K562 (cell line): ENCODE measurements at regions of chr11 and their contacts with region 1.

Region 1: GRCh38 chr11:111454561-111455192 is 57.5 kb downstream of the BTG4 start:
- DNase-seq: peak; percentile 65 to 80 (median 78)
- ATAC-seq: peak; percentile 92
- H3K4me3 ChIP-seq: no peak overlapping the region
- H3K27ac ChIP-seq: no peak overlapping the region
- H3K4me1 ChIP-seq: peaks cover 0 to 6% of the 10 kb centered on the region in 2 experiments; a peak in 1 of 5 replicates
- H3K27me3 ChIP-seq: peaks cover 3 to 50% of the 10 kb centered on the region in 2 experiments; a peak in 4 of 5 replicates
- CTCF ChIP-seq: peak; percentile 28 to 59 (median 56); a peak in 4 of 6 replicates
- EP300 ChIP-seq: no peak
- POLR2A ChIP-seq: no peak
- RAD21 ChIP-seq: peak in 1 of 2 experiments; percentile 44; a peak in 2 of 4 replicates

Region 2: DNA sequence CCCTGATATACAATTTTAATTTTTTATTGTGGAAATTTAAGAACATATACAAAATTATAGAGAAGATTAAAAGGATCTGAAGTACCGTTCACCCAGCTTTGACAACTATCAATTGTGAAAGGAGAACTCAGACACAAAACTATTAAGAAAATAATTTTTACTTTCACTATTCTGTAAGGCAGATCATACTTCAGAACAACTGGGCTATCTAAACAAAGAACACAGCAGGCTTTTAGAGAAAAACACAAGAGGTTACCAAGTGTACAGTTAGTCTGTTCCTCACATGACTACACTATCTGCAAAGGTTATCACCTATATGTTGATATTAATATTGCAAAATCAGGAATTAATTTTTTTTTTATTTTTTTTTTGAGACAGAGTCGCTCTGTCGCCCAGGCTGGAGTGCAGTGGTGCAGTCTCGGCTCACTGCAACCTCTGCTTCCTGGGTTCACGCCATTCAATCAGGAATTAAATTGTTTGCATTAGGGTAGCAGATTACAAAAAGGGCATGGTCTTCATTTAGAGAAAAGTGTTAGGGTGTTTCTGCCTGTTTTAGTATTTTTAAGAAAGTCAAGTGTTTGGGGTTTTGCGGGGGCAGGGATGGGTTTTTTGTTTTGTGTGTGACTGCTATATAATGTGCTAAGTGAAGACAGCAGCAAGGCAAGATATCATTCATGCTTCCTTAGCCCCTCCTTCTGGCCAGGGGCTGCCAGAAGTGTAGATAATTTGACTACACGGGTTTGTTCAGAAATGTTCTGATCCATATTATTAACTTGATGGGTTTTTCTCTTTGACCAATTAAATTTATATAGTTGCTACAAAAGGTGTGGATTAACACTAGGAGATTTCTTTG is 119.9 kb after region 1 on chr11:
- CTCF ChIA-PET with region 1: no interaction called
- POLR2A ChIA-PET with region 1: no interaction called
- in situ Hi-C with region 1: no loop called
- intact Hi-C with region 1: loop called (anchors 2 kb)
- DNase-seq: peak in 1 of 4 experiments; percentile 37
- ATAC-seq: peak; percentile 87
- H3K4me3 ChIP-seq: no peak overlapping the region
- H3K27ac ChIP-seq: no peak overlapping the region
- H3K4me1 ChIP-seq: peaks cover 0 to 5% of the 10 kb centered on the region in 2 experiments; a peak in 1 of 5 replicates
- H3K27me3 ChIP-seq: peaks cover 3 to 7% of the 10 kb centered on the region in 2 experiments; a peak in 3 of 5 replicates
- CTCF ChIP-seq: peak in 2 of 3 experiments; percentile 18 to 43; a peak in 2 of 6 replicates
- EP300 ChIP-seq: no peak
- POLR2A ChIP-seq: no peak
- RAD21 ChIP-seq: peak in 1 of 2 experiments; percentile 43; a peak in 3 of 4 replicates

Region 3: DNA sequence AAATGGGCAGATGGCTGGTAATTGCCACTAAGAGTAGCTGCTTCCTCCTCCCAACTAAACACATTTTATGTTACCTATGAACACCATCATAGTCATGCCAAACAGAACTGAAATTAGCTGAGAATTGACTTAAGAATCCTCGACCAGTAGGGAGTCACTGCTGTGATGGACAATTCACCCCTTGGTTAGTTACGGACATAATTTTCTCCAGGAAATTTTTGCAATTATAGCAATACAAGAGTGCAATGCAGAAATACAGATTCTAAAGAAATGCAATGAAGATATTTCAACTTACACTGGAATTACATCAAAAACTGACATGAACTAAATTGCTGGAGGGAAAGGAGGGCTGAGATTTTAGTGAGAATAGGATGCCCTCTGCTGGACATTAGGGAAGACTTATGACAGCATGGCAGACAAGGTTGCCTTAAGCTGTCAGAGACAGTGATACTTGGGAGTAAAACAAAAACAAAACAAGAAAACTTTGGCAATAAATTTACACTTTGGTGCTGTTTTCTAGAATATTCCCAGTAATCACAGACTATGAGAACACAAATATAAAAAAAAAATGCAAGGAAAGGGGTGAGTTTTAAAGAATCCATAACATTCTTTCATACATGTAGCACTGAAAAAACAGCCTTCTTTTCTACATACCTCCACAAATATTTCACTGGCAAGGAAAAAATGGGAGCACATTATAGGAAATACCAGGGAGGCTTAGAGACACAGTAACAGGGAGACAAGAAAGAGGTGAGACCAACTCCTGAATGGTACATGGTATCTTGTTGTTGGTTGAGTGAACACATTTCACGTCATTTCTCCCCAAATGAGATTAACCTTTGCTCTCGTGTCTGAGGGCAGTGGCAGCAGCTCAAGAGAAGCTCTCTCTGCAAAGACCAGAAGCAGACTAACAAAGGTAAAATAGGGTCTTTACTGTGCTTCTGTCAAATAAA is 322.7 kb after region 1 on chr11:
- CTCF ChIA-PET with region 1: interaction called, 9 read pairs
- POLR2A ChIA-PET with region 1: no interaction called
- in situ Hi-C with region 1: no loop called
- intact Hi-C with region 1: loop called (anchors 1 kb)
- DNase-seq: peak; percentile 59 to 77 (median 65)
- ATAC-seq: peak; percentile 97
- H3K4me3 ChIP-seq: no peak overlapping the region
- H3K27ac ChIP-seq: 0 out of 3 replicates have a peak overlapping the region, but pooled peaks have one; percentile 6
- H3K4me1 ChIP-seq: no peaks in the 10 kb centered on the region
- H3K27me3 ChIP-seq: no peaks in the 10 kb centered on the region
- CTCF ChIP-seq: peak; percentile 71 to 90 (median 75)
- EP300 ChIP-seq: no peak
- POLR2A ChIP-seq: no peak
- RAD21 ChIP-seq: peak; percentile 95 to 97

Region 4: DNA sequence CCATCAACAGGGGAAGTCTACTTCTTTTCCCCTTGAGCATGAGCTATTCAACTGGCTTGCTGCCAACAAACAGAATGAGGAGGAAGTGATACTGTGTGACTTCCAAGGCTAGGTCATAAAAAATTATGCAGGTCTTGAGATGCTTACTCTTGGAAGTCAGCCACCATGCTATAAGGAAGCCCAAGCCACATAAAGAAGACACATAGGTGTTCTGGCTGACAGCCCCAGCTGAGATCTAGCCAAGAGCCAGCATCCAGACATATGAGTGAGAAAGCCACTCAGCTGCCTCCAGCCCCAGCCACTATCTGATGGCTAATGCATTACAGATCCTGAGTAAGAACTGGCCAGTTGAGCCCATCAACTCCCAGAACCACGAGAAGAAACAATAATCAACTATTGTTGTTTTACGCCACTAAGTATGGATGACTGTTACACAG is 342.5 kb after region 1 on chr11:
- CTCF ChIA-PET with region 1: no interaction called
- POLR2A ChIA-PET with region 1: interaction called, 3 read pairs
- in situ Hi-C with region 1: loop called (anchors 10 kb)
- intact Hi-C with region 1: no loop called
- DNase-seq: peak in 2 of 4 experiments; percentile 18 to 65
- ATAC-seq: peak; percentile 80
- H3K4me3 ChIP-seq: no peak overlapping the region
- H3K27ac ChIP-seq: no peak overlapping the region
- H3K4me1 ChIP-seq: peaks cover 0 to 7% of the 10 kb centered on the region in 2 experiments; a peak in 2 of 5 replicates
- H3K27me3 ChIP-seq: no peaks in the 10 kb centered on the region
- CTCF ChIP-seq: no peak
- EP300 ChIP-seq: no peak
- POLR2A ChIP-seq: no peak
- RAD21 ChIP-seq: peak in 1 of 2 experiments; percentile 15; a peak in 1 of 4 replicates